H1 (cell line): ENCODE measurements at regions of chr3 and their contacts with region 1.

Region 1: DNA sequence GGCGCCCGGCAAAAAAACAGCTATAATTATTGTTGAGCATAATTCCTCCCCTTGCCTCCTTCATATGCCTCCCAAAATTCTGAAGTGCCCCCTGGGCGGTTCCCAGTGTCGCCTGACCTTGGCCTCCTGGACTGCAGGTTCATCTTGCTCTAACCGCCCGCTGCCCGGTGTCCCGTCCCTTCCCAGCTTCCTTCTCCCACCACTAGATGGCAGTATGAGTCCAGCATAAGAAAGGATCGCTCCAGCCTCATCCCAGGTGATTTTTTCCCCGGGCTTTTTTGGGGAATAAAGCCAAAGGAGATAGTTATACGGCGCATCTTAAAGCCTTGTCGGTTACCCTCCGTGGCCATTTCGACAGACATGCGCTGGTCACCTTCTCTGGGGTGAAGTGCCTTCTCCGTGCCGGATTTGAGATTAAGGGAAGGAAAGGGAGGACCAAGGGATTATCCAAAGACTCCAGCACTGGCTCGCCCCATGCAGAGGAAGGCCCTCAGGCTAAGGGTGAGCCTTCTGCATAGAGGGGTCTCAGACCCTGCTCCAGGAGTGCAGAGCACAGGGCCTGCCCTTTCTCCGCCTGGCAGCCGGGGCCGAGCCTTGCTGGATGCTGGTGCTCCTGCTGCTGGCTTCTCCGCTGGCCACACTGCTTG is 45.8 kb upstream of the TRA2B start:
- DNase-seq: peak; percentile 49 to 90
- H3K4me3 ChIP-seq: peak overlapping the region in 3 of 4 experiments; percentile 12 to 44 (median 34); a peak in 5 of 8 replicates
- H3K27ac ChIP-seq: no peak overlapping the region
- H3K4me1 ChIP-seq: peaks cover 0 to 5% (median 2%) of the 10 kb centered on the region in 4 experiments; a peak in 3 of 7 replicates
- H3K27me3 ChIP-seq: peaks cover 0 to 3% (median 0%) of the 10 kb centered on the region in 4 experiments; a peak in 2 of 7 replicates
- CTCF ChIP-seq: peak; percentile 85 to 93 (median 88)
- EP300 ChIP-seq: no peak
- POLR2A ChIP-seq: no peak
- RAD21 ChIP-seq: peak; percentile 98 to 99

Region 2: GRCh38 chr3:185837414-185837813 is 146.2 kb before region 1 on chr3:
- CTCF ChIA-PET with region 1: no interaction called
- POLR2A ChIA-PET with region 1: no interaction called
- DNase-seq: no peak
- H3K4me3 ChIP-seq: no peak overlapping the region
- H3K27ac ChIP-seq: no peak overlapping the region
- H3K4me1 ChIP-seq: no peaks in the 10 kb centered on the region
- H3K27me3 ChIP-seq: no peaks in the 10 kb centered on the region
- CTCF ChIP-seq: no peak
- EP300 ChIP-seq: no peak
- POLR2A ChIP-seq: no peak
- RAD21 ChIP-seq: no peak

Region 3: GRCh38 chr3:185968168-185968567 is 15.4 kb before region 1 on chr3:
- CTCF ChIA-PET with region 1: interaction called, 19 read pairs
- POLR2A ChIA-PET with region 1: no interaction called
- DNase-seq: no peak
- H3K4me3 ChIP-seq: no peak overlapping the region
- H3K27ac ChIP-seq: no peak overlapping the region
- H3K4me1 ChIP-seq: no peaks in the 10 kb centered on the region
- H3K27me3 ChIP-seq: no peaks in the 10 kb centered on the region
- CTCF ChIP-seq: peak in 2 of 3 experiments; percentile 22 to 27; a peak in 2 of 4 replicates
- EP300 ChIP-seq: no peak
- POLR2A ChIP-seq: no peak
- RAD21 ChIP-seq: peak; percentile 7 to 22; a peak in 1 of 4 replicates

Region 4: DNA sequence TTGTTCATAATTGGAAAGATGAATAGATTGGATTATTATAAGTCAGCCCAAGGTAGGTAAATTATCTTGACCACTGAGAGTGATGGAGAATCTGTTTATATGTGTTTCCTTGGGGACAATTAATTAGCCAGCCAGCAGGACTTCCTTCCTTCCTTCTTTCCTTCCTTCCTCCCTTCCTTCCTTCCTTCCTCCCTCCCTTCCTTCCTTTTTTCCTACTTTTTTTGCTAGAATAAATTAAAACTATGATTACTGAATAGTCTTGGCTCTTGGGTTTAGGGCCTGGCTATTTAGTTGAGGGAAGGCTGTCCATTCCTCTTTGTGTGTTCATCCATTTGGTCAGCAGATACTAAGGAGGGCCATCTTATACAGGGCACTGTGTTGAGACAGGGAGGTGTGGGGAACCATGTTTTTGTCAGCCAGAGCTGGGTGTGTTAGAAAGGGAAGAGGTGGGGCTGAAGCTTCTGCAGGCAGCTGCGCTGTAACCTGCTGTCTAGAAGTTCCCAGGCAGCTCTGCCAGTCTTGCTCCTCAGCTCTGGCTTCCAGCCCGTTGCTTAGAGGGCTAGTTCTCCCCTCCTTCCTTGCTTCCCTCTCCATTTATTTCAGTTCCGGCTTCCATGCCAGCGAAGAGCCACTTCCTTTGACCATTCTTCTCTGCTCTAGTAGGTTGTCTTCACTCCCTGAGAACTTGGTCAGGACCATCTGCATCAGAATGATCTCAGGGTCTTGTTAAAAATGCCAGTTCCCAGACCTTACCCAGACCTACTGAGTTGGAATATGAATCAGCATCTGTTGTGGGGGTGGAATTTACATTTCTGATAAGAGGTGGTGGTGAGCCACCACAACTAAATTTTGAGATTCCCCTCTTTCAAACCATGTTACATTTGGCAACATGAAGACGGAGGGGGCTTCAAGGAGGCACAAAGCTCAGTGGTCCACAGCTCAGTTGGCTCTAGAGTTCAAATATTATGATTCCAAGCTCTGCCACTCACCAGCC is 264.5 kb after region 1 on chr3:
- CTCF ChIA-PET with region 1: interaction called, 57 read pairs
- POLR2A ChIA-PET with region 1: no interaction called
- DNase-seq: no peak
- H3K4me3 ChIP-seq: no peak overlapping the region
- H3K27ac ChIP-seq: no peak overlapping the region
- H3K4me1 ChIP-seq: peaks cover 0 to 3% (median 0%) of the 10 kb centered on the region in 4 experiments; a peak in 1 of 7 replicates
- H3K27me3 ChIP-seq: no peaks in the 10 kb centered on the region
- CTCF ChIP-seq: no peak
- EP300 ChIP-seq: no peak
- POLR2A ChIP-seq: no peak
- RAD21 ChIP-seq: no peak

Region 5: GRCh38 chr3:186277268-186277909 is 293.8 kb after region 1 on chr3:
- CTCF ChIA-PET with region 1: interaction called, 23 read pairs
- POLR2A ChIA-PET with region 1: no interaction called
- DNase-seq: no peak
- H3K4me3 ChIP-seq: no peak overlapping the region
- H3K27ac ChIP-seq: no peak overlapping the region
- H3K4me1 ChIP-seq: no peaks in the 10 kb centered on the region
- H3K27me3 ChIP-seq: no peaks in the 10 kb centered on the region
- CTCF ChIP-seq: peak; percentile 53 to 72 (median 67)
- EP300 ChIP-seq: no peak
- POLR2A ChIP-seq: no peak
- RAD21 ChIP-seq: peak; percentile 86 to 92

Region 6: DNA sequence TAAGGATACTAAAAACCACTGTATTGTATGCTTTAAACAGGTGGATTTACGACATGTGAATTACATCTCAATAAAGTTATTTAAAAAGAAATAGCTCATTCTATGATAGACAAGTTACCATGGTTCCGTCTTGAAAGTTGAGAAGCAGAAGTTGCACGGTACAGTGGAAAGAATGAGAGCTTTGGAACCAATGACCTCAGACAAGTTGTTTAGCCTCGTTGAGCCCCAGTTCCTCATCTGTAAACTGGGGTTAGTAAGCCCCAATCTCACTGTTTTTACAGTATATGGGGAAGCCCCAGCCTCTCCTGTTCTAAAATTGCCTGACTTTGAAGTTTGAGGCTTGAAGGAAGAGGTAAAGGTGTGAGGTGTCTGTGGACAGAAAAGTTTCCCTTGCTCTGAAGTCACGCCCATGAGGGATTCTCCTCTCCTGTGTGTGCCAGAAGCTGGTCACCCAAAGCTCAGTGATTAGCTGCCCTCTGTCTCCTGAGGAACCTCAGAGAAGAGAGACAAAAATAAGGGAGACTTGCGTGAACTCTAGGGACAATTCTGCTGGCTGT is 550.6 kb after region 1 on chr3:
- CTCF ChIA-PET with region 1: interaction called, 26 read pairs
- POLR2A ChIA-PET with region 1: no interaction called
- DNase-seq: no peak
- H3K4me3 ChIP-seq: no peak overlapping the region
- H3K27ac ChIP-seq: no peak overlapping the region
- H3K4me1 ChIP-seq: 0 out of 7 replicates have a peak, but pooled peaks cover 0 to 3% (median 0%) of the 10 kb centered on the region in 4 experiments
- H3K27me3 ChIP-seq: peaks cover 0 to 1% (median 0%) of the 10 kb centered on the region in 4 experiments; a peak in 1 of 7 replicates
- CTCF ChIP-seq: no peak
- EP300 ChIP-seq: no peak
- POLR2A ChIP-seq: no peak
- RAD21 ChIP-seq: no peak